ENCODE measurements at regions of chr17 and their contacts with region 1.

Region 1: GRCh38 chr17:73255671-73256181 is 6.0 kb downstream of the CPSF4L start:
- DNase-seq: peak in 3 of 6 donors; percentile 55 to 82 (median 61)
- ATAC-seq: peak; percentile 74 to 89 (median 84)
- H3K4me3 ChIP-seq: no peak overlapping the region
- H3K27ac ChIP-seq: no peak overlapping the region
- H3K4me1 ChIP-seq: no peaks in the 10 kb centered on the region
- H3K27me3 ChIP-seq: no peaks in the 10 kb centered on the region
- CTCF ChIP-seq: peak; percentile 85 to 97 (median 93)

Region 2: GRCh38 chr17:72145981-72146380 is 1109.7 kb before region 1 on chr17:
- intact Hi-C with region 1: no loop called
- DNase-seq: no peak
- ATAC-seq: no peak
- H3K4me3 ChIP-seq: no peak overlapping the region
- H3K27ac ChIP-seq: no peak overlapping the region
- H3K4me1 ChIP-seq: no peaks in the 10 kb centered on the region
- H3K27me3 ChIP-seq: no peaks in the 10 kb centered on the region
- CTCF ChIP-seq: no peak

Region 3: GRCh38 chr17:73182616-73183310 is 73.0 kb before region 1 on chr17:
- intact Hi-C with region 1: no loop called
- DNase-seq: no peak
- ATAC-seq: peak; percentile 46 to 90 (median 80)
- H3K4me3 ChIP-seq: no peak overlapping the region
- H3K27ac ChIP-seq: no peak overlapping the region
- H3K4me1 ChIP-seq: peaks cover 0 to 5% (median 0%) of the 10 kb centered on the region in 3 donors
- H3K27me3 ChIP-seq: no peaks in the 10 kb centered on the region
- CTCF ChIP-seq: no peak

Region 4: GRCh38 chr17:73365906-73366623 is 110.3 kb after region 1 on chr17:
- intact Hi-C with region 1: loop called in 2 of 3 experiments (anchors 5 kb)
- DNase-seq: peak in 1 of 6 donors; percentile 63
- ATAC-seq: no peak
- H3K4me3 ChIP-seq: no peak overlapping the region
- H3K27ac ChIP-seq: no peak overlapping the region
- H3K4me1 ChIP-seq: peaks cover 0 to 8% (median 4%) of the 10 kb centered on the region in 3 donors
- H3K27me3 ChIP-seq: no peaks in the 10 kb centered on the region
- CTCF ChIP-seq: no peak